GM10248 (cell line): ENCODE measurements at regions of chr5 and their contacts with region 1.

Region 1: DNA sequence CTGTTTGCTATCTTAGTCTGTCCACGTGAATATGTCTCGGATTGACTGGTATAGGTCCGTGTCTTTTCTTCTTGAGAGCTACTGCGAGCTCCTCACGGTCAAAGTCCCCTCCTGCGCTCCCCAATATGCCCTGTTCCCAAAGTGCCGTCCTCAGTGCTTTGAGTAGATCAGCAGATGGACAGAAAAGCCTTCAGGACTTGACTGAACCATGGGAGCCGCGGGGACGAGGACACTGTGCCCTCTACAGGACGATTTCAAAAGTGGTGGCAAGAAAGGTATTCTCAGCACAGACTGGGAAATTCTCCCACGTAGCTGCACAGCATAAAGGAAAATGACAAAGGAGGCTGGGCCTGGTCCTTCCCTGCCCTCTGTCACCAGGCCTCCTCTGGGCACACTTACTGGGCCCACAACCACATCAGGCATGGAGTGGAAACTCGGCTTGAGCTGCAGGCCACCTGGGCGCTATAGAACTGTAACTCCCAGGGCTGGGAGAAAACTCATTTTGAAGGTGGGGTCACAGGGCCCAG is 16.6 kb upstream of the MTMR12 start:
- DNase-seq: peak; percentile 84
- CTCF ChIP-seq: peak; percentile 78

Region 2: DNA sequence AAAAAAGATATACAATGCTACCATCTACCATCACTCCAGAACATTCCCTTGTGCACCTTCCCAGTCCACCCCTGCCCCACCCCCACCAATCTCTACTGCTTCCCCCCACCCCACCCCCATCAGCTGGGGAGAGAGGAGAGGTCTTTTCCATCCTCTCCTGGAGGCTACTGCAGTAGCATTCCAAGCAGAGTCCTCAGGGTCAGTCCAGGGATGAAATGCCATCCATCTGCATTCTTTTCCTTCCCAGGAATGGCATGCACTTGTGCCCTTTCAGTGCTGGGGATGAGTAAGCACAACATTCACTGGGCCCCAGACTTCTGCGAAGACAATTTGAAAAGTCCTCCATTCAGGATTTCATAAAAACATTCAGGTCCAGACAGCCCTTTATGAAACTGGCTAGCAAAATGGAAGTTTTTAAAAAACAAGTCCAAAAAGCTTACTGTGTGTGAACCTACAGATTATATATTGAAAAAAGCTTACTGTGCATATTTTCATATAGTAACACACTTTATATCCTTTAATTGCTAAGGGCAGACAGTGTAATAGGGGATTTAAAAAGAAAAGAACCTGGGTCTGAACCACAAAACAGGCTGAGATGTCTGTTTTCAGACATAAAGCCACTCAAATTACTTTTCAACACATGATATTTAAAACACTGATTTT is 105.3 kb before region 1 on chr5:
- CTCF ChIA-PET with region 1: interaction called, 204 read pairs
- POLR2A ChIA-PET with region 1: no interaction called
- DNase-seq: no peak
- CTCF ChIP-seq: no peak

Region 3: GRCh38 chr5:32241034-32241783 is 88.2 kb before region 1 on chr5:
- CTCF ChIA-PET with region 1: interaction called, 204 read pairs
- POLR2A ChIA-PET with region 1: no interaction called
- DNase-seq: no peak
- CTCF ChIP-seq: no peak

Region 4: DNA sequence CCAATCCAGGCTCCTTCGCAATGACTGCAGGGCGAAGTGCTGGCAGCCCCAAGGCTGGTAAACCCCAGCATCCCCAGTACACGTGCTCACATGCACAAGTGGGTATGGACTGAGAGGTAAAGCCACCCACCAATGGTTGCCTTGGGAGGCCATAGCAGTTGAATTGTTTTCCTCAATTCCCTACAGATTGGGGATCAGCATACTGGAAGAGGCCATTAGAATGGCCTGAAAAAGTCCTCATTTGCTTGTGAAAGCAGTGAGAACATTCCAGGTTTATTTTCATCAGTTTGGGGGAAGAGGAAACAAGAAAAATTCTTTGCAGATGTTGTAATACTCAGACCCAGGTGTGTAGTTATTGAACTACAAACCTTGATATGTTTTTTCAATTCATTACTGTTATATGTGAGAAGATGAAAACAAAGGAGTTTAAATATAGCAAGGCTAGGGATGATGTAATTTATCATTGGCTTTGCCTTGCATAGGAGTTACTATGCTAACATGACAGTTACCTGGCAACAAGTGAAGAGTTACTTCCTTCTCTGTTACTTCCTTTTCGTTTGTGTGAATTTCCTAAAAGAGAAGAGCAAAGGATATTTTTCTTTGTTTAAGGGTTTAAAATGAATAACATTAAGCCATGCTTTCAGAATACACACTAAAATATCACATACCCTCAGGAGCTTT is 53.1 kb before region 1 on chr5:
- CTCF ChIA-PET with region 1: interaction called, 21 read pairs
- POLR2A ChIA-PET with region 1: no interaction called
- DNase-seq: peak; percentile 53
- CTCF ChIP-seq: no peak

Region 5: GRCh38 chr5:32383065-32383464 is 53.7 kb after region 1 on chr5:
- CTCF ChIA-PET with region 1: interaction called, 14 read pairs
- POLR2A ChIA-PET with region 1: no interaction called
- DNase-seq: no peak
- CTCF ChIP-seq: no peak

Region 6: GRCh38 chr5:32709781-32710549 is 380.6 kb after region 1 on chr5:
- CTCF ChIA-PET with region 1: no interaction called
- POLR2A ChIA-PET with region 1: no interaction called
- DNase-seq: peak; percentile 67
- CTCF ChIP-seq: peak; percentile 67